ENCODE measurements at regions of chr22 and their contacts with region 1.

Region 1: GRCh38 chr22:40024201-40025061 is 29.7 kb downstream of the FAM83F start:
- DNase-seq: peak; percentile 61 to 79
- H3K4me3 ChIP-seq: no peak overlapping the region
- H3K4me3 Mint-ChIP-seq: no peak overlapping the region
- H3K27ac Mint-ChIP-seq: no peak overlapping the region
- H3K4me1 ChIP-seq: no peaks in the 10 kb centered on the region
- H3K4me1 Mint-ChIP-seq: no peaks in the 10 kb centered on the region
- H3K27me3 ChIP-seq: no peaks in the 10 kb centered on the region
- H3K27me3 Mint-ChIP-seq: no peaks in the 10 kb centered on the region
- CTCF ChIP-seq: peak; percentile 83 to 95

Region 2: DNA sequence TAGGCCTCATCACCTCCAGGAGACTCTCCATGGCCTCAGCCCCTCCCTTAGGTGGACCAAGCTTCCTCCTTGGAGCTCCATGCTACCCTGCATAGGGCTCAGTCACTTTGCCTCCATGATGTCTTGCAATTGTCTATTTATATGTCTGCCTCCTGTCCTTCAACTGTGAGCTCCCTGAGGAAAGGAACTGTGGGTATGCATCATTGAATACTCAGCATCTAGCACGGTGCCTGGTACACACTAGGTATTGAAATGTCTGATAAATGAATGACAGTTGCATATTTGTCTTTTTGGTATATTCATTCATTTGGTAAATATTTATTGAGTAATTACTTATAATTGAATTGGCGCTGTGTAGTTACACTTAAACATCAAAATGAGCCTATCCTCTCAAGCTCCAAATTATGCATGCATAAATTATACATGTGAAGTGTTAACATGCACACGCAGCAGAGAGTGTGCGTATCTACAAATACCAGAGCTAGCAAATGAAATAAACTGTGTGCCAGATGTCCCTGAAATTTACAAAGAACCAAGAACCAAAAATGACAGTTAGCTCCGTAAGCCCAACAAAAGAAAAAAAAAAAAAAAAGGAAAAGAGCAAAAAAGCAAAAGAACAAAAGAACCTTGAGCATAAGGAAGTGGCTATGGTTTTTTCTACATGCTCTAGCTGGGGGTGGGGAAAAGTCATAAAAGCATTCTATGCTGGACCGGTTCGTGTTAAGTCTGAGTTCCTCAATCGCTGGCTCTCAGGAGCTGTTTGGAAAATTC is 98.3 kb before region 1 on chr22:
- CTCF ChIA-PET with region 1: interaction called, 11 read pairs
- POLR2A ChIA-PET with region 1: no interaction called
- intact Hi-C with region 1: no loop called
- DNase-seq: no peak
- H3K4me3 ChIP-seq: no peak overlapping the region
- H3K4me3 Mint-ChIP-seq: no peak overlapping the region
- H3K27ac Mint-ChIP-seq: no peak overlapping the region
- H3K4me1 ChIP-seq: no peaks in the 10 kb centered on the region
- H3K4me1 Mint-ChIP-seq: no peaks in the 10 kb centered on the region
- H3K27me3 ChIP-seq: no peaks in the 10 kb centered on the region
- H3K27me3 Mint-ChIP-seq: peaks cover 12% of the 10 kb centered on the region
- CTCF ChIP-seq: no peak

Region 3: GRCh38 chr22:39932918-39933649 is 91.3 kb before region 1 on chr22:
- CTCF ChIA-PET with region 1: interaction called, 23 read pairs
- POLR2A ChIA-PET with region 1: no interaction called
- intact Hi-C with region 1: loop called (anchors 2 kb)
- DNase-seq: peak; percentile 37 to 53
- H3K4me3 ChIP-seq: no peak overlapping the region
- H3K4me3 Mint-ChIP-seq: no peak overlapping the region
- H3K27ac Mint-ChIP-seq: no peak overlapping the region
- H3K4me1 ChIP-seq: no peaks in the 10 kb centered on the region
- H3K4me1 Mint-ChIP-seq: no peaks in the 10 kb centered on the region
- H3K27me3 ChIP-seq: no peaks in the 10 kb centered on the region
- H3K27me3 Mint-ChIP-seq: peaks cover 23% of the 10 kb centered on the region
- CTCF ChIP-seq: peak; percentile 64

Region 4: DNA sequence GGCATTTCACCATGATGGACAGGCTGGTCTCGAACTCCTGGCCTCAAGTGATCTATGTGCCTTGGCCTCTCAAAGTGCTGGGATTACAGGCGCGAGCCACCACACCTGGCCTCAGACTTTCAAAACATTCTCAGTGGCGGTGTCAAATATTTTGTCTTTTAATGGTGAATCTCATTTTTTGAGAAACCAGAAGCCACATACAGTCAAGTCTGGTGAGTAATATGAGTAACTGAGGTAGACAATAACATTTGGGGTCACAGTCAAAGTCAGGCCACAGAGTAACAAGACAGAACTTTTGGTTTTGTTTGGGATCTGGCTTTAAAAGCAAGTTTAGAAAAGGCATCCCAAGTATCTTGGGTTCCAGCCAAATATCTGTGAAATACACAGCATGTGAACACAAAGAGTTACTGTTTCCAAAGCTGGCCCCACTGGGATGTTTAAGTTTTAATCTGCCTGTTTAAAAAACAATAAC is 69.8 kb before region 1 on chr22:
- CTCF ChIA-PET with region 1: interaction called, 13 read pairs
- POLR2A ChIA-PET with region 1: no interaction called
- intact Hi-C with region 1: no loop called
- DNase-seq: no peak
- H3K4me3 ChIP-seq: no peak overlapping the region
- H3K4me3 Mint-ChIP-seq: no peak overlapping the region
- H3K27ac Mint-ChIP-seq: no peak overlapping the region
- H3K4me1 ChIP-seq: no peaks in the 10 kb centered on the region
- H3K4me1 Mint-ChIP-seq: no peaks in the 10 kb centered on the region
- H3K27me3 ChIP-seq: no peaks in the 10 kb centered on the region
- H3K27me3 Mint-ChIP-seq: peaks cover 3% of the 10 kb centered on the region
- CTCF ChIP-seq: no peak

Region 5: GRCh38 chr22:39985383-39986035 is 38.9 kb before region 1 on chr22:
- CTCF ChIA-PET with region 1: interaction called, 10 read pairs
- POLR2A ChIA-PET with region 1: no interaction called
- intact Hi-C with region 1: no loop called
- DNase-seq: no peak
- H3K4me3 ChIP-seq: no peak overlapping the region
- H3K4me3 Mint-ChIP-seq: no peak overlapping the region
- H3K27ac Mint-ChIP-seq: no peak overlapping the region
- H3K4me1 ChIP-seq: peaks cover 9% of the 10 kb centered on the region
- H3K4me1 Mint-ChIP-seq: peaks cover 8% of the 10 kb centered on the region
- H3K27me3 ChIP-seq: no peaks in the 10 kb centered on the region
- H3K27me3 Mint-ChIP-seq: no peaks in the 10 kb centered on the region
- CTCF ChIP-seq: no peak

Region 6: GRCh38 chr22:39997939-39998338 is 26.5 kb before region 1 on chr22:
- CTCF ChIA-PET with region 1: interaction called, 17 read pairs
- POLR2A ChIA-PET with region 1: no interaction called
- intact Hi-C with region 1: no loop called
- DNase-seq: peak; percentile 60 to 62
- H3K4me3 ChIP-seq: no peak overlapping the region
- H3K4me3 Mint-ChIP-seq: peak overlapping the region; percentile 64
- H3K27ac Mint-ChIP-seq: peak overlapping the region; percentile 93
- H3K4me1 ChIP-seq: peaks cover 75% of the 10 kb centered on the region
- H3K4me1 Mint-ChIP-seq: peaks cover 41% of the 10 kb centered on the region
- H3K27me3 ChIP-seq: no peaks in the 10 kb centered on the region
- H3K27me3 Mint-ChIP-seq: no peaks in the 10 kb centered on the region
- CTCF ChIP-seq: no peak

Region 7: DNA sequence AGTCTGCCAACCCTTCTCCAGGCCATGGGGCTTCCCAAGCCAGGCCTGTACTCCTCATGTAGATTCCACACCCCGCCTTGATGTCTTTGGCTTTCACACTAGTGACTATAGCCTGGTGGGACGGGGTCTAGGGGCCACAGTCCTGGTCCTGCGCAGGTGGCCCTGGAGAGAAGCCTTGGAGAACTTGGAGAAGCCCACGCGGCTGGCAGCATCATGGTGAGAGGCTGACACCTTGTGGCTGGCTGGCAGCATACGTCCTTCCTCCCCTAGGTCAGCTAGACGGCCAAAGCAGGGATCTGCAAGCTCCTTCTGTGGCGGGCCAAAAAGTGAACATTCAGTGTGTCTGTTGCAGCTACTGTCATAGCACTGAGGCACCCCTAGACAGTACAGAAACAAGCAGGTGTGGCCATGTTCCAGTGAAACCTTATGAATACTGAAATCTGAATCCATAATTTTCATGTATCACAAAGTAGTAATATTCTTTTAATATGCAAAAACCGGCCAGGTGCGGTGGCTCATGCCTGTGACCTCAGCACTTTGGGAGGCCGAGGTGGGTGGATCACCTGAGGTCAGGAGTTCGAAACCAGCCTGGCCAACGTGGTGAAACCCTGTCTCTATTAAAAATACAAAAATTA is 12.3 kb after region 1 on chr22:
- CTCF ChIA-PET with region 1: interaction called, 13 read pairs
- POLR2A ChIA-PET with region 1: no interaction called
- intact Hi-C with region 1: no loop called
- DNase-seq: peak; percentile 73 to 74
- H3K4me3 ChIP-seq: no peak overlapping the region
- H3K4me3 Mint-ChIP-seq: no peak overlapping the region
- H3K27ac Mint-ChIP-seq: no peak overlapping the region
- H3K4me1 ChIP-seq: no peaks in the 10 kb centered on the region
- H3K4me1 Mint-ChIP-seq: peaks cover 11% of the 10 kb centered on the region
- H3K27me3 ChIP-seq: no peaks in the 10 kb centered on the region
- H3K27me3 Mint-ChIP-seq: peaks cover 5% of the 10 kb centered on the region
- CTCF ChIP-seq: peak; percentile 80 to 87

Region 8: GRCh38 chr22:40121461-40121860 is 97.0 kb after region 1 on chr22:
- CTCF ChIA-PET with region 1: no interaction called
- POLR2A ChIA-PET with region 1: no interaction called
- intact Hi-C with region 1: no loop called
- DNase-seq: no peak
- H3K4me3 ChIP-seq: no peak overlapping the region
- H3K4me3 Mint-ChIP-seq: no peak overlapping the region
- H3K27ac Mint-ChIP-seq: no peak overlapping the region
- H3K4me1 ChIP-seq: no peaks in the 10 kb centered on the region
- H3K4me1 Mint-ChIP-seq: no peaks in the 10 kb centered on the region
- H3K27me3 ChIP-seq: no peaks in the 10 kb centered on the region
- H3K27me3 Mint-ChIP-seq: no peaks in the 10 kb centered on the region
- CTCF ChIP-seq: no peak